Naive thymus-derived CD4-positive, alpha-beta T cell (primary cell): ENCODE measurements at regions of chrX and their contacts with region 1.

Region 1: DNA sequence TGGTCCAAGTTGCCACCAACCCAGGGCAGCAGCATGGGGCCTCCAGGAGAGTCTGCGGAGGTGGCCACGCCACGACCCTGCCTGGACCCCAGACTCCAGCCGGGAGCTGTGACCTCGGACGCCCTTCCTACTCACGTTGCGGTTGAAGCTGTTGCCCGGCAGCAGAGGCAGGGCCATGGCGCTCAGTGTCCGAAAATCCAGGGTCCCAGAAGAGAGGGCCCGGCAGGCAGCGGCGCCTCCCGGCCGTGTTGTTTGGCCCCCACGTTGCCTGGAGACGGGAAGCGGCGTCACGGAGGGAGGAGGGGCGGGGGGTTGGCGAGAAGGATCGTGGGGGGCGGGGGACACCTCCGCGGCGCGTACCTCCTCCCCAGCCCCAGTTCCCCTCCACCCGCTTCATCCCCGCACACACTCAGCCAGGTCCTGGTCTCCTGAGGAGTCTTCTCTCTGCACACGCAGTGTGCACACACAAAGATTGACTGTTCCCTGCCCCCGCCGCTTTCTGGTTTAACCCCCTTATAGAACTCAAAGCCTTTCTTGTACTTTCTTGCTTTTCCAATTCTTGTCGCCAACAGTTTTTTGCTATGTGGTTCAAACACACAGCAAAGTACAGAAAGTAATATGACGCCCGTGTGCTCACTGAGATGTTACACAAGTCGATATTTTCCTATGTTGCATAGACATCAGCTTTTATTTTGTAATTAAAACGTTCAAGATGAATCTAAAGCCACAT is at the start of gene EFHC2:
- DNase-seq: peak; percentile 24 to 65 (median 51)
- ATAC-seq: peak; percentile 75
- H3K4me3 ChIP-seq: peak within 1 kb of the TSS; percentile 73
- H3K4me3 Mint-ChIP-seq: peak within 1 kb of the TSS; percentile 85 to 96 (median 92)
- H3K27ac ChIP-seq: peak within 1 kb of the TSS; percentile 84
- H3K27ac Mint-ChIP-seq: peak within 1 kb of the TSS; percentile 92 to 99 (median 96)
- H3K4me1 ChIP-seq: peaks cover 0 to 3% of the 10 kb centered on the region in 2 donors
- H3K4me1 Mint-ChIP-seq: peaks cover 11 to 58% (median 21%) of the 10 kb centered on the region in 7 donors
- H3K27me3 ChIP-seq: no peaks in the 10 kb centered on the region
- H3K27me3 Mint-ChIP-seq: no peaks in the 10 kb centered on the region
- total RNA-seq, gene EFHC2: 0.31 to 2.8 (median 1.7) TPM

Region 2: DNA sequence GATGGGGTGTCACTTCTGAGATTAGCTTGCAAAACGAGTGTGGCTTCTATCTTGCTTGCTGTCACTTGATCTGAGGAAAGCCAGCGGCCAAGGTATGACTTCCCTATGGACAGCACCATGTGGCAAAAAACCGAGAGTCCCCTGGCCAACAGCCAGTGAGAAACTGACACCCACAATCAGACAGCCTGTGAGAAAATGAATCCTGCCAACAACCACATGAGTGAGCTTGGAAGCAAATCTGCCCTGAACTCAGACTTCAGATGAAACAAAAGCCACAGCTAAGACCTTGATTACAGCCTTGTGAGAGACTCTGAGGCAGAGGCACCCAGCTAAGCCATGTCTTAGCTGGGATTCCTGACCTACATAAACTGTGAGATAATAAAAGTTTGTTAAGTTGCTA is 1611.1 kb before region 1 on chrX:
- CTCF ChIA-PET with region 1: no interaction called
- POLR2A ChIA-PET with region 1: no interaction called
- intact Hi-C with region 1: no loop called
- DNase-seq: no peak
- ATAC-seq: no peak
- H3K4me3 ChIP-seq: no peak overlapping the region
- H3K4me3 Mint-ChIP-seq: no peak overlapping the region
- H3K27ac ChIP-seq: no peak overlapping the region
- H3K27ac Mint-ChIP-seq: peak overlapping the region in 1 of 9 donors; percentile 39
- H3K4me1 ChIP-seq: no peaks in the 10 kb centered on the region
- H3K4me1 Mint-ChIP-seq: peaks cover 0 to 8% (median 0%) of the 10 kb centered on the region in 7 donors
- H3K27me3 ChIP-seq: no peaks in the 10 kb centered on the region
- H3K27me3 Mint-ChIP-seq: no peaks in the 10 kb centered on the region

Region 3: GRCh38 chrX:44244008-44244407 is 99.6 kb before region 1 on chrX:
- CTCF ChIA-PET with region 1: interaction called, 3 read pairs
- POLR2A ChIA-PET with region 1: no interaction called
- intact Hi-C with region 1: loop called in 1 of 2 experiments (anchors 2 kb)
- DNase-seq: peak in 6 of 9 donors; percentile 8 to 51 (median 40)
- ATAC-seq: peak; percentile 46
- H3K4me3 ChIP-seq: no peak overlapping the region
- H3K4me3 Mint-ChIP-seq: peak overlapping the region in 2 of 10 donors; percentile 0 to 6
- H3K27ac ChIP-seq: no peak overlapping the region
- H3K27ac Mint-ChIP-seq: peak overlapping the region in 8 of 9 donors; percentile 5 to 79 (median 52)
- H3K4me1 ChIP-seq: peaks cover 5 to 22% of the 10 kb centered on the region in 2 donors
- H3K4me1 Mint-ChIP-seq: peaks cover 10 to 46% (median 30%) of the 10 kb centered on the region in 7 donors
- H3K27me3 ChIP-seq: no peaks in the 10 kb centered on the region
- H3K27me3 Mint-ChIP-seq: no peaks in the 10 kb centered on the region

Region 4: DNA sequence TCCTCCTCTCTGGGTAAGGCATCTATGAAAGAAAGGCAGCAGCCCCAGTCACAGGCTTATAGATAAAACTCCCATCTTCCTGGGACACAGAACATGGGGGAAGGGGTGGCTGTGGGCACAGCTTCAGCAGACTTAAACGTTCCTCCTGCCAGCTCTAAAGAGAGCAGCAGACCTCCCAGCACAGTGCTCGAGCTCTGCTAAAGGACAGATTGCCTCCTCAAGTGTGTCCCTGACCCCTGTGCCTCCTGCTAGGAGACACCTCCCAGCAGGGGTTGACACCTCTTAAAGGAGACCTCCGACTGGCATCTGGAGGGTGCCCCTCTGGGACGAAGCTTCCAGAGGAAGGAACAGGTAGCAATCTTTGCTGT is 90.0 kb before region 1 on chrX:
- CTCF ChIA-PET with region 1: no interaction called
- POLR2A ChIA-PET with region 1: interaction called, 4 read pairs
- intact Hi-C with region 1: loop called (anchors 1 to 2 kb)
- DNase-seq: no peak
- ATAC-seq: no peak
- H3K4me3 ChIP-seq: peak overlapping the region; percentile 14
- H3K4me3 Mint-ChIP-seq: peak overlapping the region; percentile 59 to 84 (median 72)
- H3K27ac ChIP-seq: peak overlapping the region; percentile 56
- H3K27ac Mint-ChIP-seq: peak overlapping the region; percentile 80 to 97 (median 91)
- H3K4me1 ChIP-seq: peaks cover 7 to 12% of the 10 kb centered on the region in 2 donors
- H3K4me1 Mint-ChIP-seq: peaks cover 15 to 64% (median 33%) of the 10 kb centered on the region in 7 donors
- H3K27me3 ChIP-seq: no peaks in the 10 kb centered on the region
- H3K27me3 Mint-ChIP-seq: no peaks in the 10 kb centered on the region

Region 5: DNA sequence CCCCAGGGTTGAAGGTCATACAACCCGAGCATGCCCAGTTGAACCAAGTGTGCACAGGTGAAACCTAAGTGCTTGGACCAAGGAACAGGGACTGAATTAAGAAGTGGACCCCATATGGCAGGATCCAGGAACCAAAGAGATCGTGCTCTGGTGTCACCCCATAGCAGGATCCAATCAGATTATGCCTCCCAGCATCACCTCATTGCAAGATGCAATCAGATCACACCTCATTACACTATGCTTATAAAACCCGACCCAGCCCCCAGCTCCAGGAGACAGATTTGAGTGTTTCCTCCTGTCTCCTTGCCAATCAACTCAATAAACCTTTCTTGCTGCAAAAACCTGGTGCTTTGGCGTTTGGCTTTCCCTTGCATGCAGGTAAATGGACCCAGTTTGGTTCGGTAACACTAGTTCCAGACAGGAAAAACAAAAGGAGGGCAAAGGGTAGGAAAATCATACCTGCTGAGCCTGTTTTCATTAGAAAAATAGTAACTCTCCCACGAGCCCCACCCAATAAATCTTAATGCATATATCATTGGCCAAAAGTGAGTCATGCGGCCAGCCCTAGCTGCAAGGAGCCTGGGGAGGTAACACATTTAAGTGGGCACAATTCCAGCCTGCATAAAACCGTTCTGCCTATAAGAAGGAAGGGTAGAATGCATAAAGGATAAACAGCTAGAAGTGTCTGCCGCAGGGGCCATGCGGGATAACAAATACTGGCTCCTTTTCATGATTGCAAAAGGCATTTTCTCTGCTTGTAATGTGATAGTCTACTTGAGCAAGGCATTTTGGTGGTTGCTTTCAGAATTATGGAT is 37.4 kb before region 1 on chrX:
- CTCF ChIA-PET with region 1: no interaction called
- POLR2A ChIA-PET with region 1: no interaction called
- intact Hi-C with region 1: loop called in 1 of 2 experiments (anchors 5 kb)
- DNase-seq: no peak
- ATAC-seq: no peak
- H3K4me3 ChIP-seq: no peak overlapping the region
- H3K4me3 Mint-ChIP-seq: no peak overlapping the region
- H3K27ac ChIP-seq: no peak overlapping the region
- H3K27ac Mint-ChIP-seq: peak overlapping the region in 1 of 9 donors; percentile 62
- H3K4me1 ChIP-seq: no peaks in the 10 kb centered on the region
- H3K4me1 Mint-ChIP-seq: peaks cover 0 to 5% (median 0%) of the 10 kb centered on the region in 7 donors
- H3K27me3 ChIP-seq: no peaks in the 10 kb centered on the region
- H3K27me3 Mint-ChIP-seq: no peaks in the 10 kb centered on the region

Region 6: GRCh38 chrX:44330227-44330626 is 13.3 kb before region 1 on chrX:
- CTCF ChIA-PET with region 1: no interaction called
- POLR2A ChIA-PET with region 1: interaction called, 5 read pairs
- intact Hi-C with region 1: loop called in 1 of 2 experiments (anchors 1 kb)
- DNase-seq: peak in 6 of 9 donors; percentile 11 to 44 (median 32)
- ATAC-seq: peak; percentile 68
- H3K4me3 ChIP-seq: no peak overlapping the region
- H3K4me3 Mint-ChIP-seq: peak overlapping the region; percentile 21 to 73 (median 64)
- H3K27ac ChIP-seq: no peak overlapping the region
- H3K27ac Mint-ChIP-seq: peak overlapping the region in 8 of 9 donors; percentile 42 to 82 (median 71)
- H3K4me1 ChIP-seq: peaks cover 8 to 11% of the 10 kb centered on the region in 2 donors
- H3K4me1 Mint-ChIP-seq: peaks cover 3 to 57% (median 42%) of the 10 kb centered on the region in 7 donors
- H3K27me3 ChIP-seq: no peaks in the 10 kb centered on the region
- H3K27me3 Mint-ChIP-seq: no peaks in the 10 kb centered on the region

Region 7: DNA sequence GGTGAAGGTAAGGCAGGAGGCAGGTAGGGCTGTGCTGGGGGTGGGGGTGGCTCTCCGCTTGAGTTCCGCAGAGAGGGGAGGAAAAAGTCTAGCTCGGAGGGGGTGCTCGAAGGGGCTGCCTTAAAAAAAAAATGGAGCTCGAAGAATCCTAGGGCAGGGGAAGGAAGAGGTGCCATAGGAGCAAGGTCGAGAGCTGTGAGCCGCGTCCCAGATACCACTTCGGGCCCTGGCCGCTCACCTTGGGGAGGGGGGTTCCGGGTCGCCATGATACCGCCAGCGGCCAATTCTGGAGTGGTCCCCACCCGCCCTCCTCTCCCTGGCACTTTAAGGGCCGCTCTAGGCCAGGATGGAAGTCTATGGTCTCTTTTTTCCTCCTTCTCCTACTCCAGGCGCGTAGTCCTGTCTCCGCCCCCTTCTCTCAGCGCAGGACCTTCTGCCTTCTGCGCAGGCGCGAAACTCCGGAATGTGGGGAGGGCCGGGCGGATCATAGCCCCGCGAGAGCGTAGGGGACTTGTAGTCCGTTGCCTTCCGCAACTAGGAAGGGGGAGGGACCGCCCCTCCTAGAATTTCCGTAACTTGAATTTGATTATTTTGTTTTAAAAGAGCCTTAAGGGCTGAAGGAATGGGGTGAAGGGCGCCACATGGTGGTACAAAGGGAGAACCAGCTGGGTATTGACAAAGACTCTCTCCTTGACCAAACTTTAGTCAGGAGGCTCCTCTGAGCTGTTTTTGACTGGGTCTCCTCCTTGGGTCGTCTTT is 199.2 kb after region 1 on chrX and contains the start of gene FUNDC1:
- CTCF ChIA-PET with region 1: no interaction called
- POLR2A ChIA-PET with region 1: no interaction called
- intact Hi-C with region 1: loop called (anchors 2 to 10 kb)
- DNase-seq: peak; percentile 75 to 93 (median 89)
- ATAC-seq: peak; percentile 98
- H3K4me3 ChIP-seq: peak within 1 kb of the TSS; percentile 79
- H3K4me3 Mint-ChIP-seq: peak within 1 kb of the TSS; percentile 89 to 97 (median 93)
- H3K27ac ChIP-seq: peak within 1 kb of the TSS; percentile 92
- H3K27ac Mint-ChIP-seq: peak within 1 kb of the TSS; percentile 86 to 97 (median 93)
- H3K4me1 ChIP-seq: peaks cover 5 to 12% of the 10 kb centered on the region in 2 donors
- H3K4me1 Mint-ChIP-seq: peaks cover 12 to 54% (median 37%) of the 10 kb centered on the region in 7 donors
- H3K27me3 ChIP-seq: no peaks in the 10 kb centered on the region
- H3K27me3 Mint-ChIP-seq: no peaks in the 10 kb centered on the region
- total RNA-seq, gene FUNDC1: 5.2 to 10.1 (median 9.8) TPM

Region 8: DNA sequence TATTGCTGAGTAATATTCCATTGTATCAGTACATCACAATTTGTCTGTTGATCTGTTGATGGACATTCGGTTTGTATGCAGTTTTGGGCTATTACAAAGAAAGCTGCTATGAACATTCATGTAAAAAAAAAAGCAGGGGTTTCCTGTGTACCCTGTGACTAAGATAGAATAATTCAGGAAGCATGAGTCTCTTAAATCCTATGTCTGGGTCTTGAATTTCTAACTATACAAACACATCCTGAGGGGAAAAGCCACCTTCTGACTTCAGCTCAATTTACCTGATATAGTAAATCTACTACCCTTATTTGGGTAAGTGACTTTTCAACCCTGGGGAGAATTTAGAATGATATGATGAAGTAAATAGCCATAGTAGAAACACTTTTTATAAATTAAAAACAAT is 293.7 kb after region 1 on chrX:
- CTCF ChIA-PET with region 1: no interaction called
- POLR2A ChIA-PET with region 1: no interaction called
- intact Hi-C with region 1: no loop called
- DNase-seq: no peak
- ATAC-seq: no peak
- H3K4me3 ChIP-seq: no peak overlapping the region
- H3K4me3 Mint-ChIP-seq: no peak overlapping the region
- H3K27ac ChIP-seq: no peak overlapping the region
- H3K27ac Mint-ChIP-seq: no peak overlapping the region
- H3K4me1 ChIP-seq: no peaks in the 10 kb centered on the region
- H3K4me1 Mint-ChIP-seq: no peaks in the 10 kb centered on the region
- H3K27me3 ChIP-seq: no peaks in the 10 kb centered on the region
- H3K27me3 Mint-ChIP-seq: no peaks in the 10 kb centered on the region

Region 9: DNA sequence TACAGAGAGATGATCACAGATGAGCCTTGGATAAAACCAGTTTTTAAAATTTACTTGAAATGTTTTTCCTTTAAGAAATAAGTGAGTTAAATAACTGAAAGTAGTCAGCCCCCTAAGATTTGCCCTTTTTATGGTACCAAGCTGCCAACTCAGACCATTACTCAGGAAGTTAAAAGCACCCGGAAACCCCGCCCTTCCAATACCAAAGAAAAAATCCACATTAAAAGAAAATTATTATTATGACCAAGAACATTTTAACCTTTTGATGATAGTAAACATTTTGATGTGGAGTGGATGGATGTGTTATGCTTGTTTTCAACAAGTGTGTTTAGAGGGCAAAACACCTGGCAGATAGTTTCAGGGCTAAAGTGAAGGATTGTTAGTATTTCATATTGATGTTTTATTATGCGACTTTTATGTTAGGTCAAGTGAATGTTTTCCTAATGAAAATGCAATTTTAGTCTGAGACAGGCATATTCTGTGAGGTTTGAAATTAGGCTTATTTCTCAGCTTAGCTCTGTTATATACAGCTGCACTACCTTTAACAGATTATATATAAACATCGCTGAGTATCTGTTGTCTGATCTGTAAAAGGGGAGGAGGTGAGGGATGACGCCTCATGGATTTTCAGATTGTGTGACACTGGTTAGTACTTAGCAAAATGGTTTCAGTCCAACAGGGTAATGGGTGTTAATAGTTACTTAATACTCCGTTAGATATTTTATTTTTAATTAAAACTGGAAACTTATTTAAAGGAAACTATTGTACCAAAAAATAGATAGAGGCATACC is 618.4 kb after region 1 on chrX:
- CTCF ChIA-PET with region 1: no interaction called
- POLR2A ChIA-PET with region 1: no interaction called
- intact Hi-C with region 1: no loop called
- DNase-seq: no peak
- ATAC-seq: no peak
- H3K4me3 ChIP-seq: no peak overlapping the region
- H3K4me3 Mint-ChIP-seq: peak overlapping the region in 4 of 10 donors; percentile 6 to 53 (median 20)
- H3K27ac ChIP-seq: no peak overlapping the region
- H3K27ac Mint-ChIP-seq: peak overlapping the region in 4 of 9 donors; percentile 30 to 71 (median 55)
- H3K4me1 ChIP-seq: peaks cover 0 to 6% of the 10 kb centered on the region in 2 donors
- H3K4me1 Mint-ChIP-seq: peaks cover 22 to 91% (median 63%) of the 10 kb centered on the region in 7 donors
- H3K27me3 ChIP-seq: no peaks in the 10 kb centered on the region
- H3K27me3 Mint-ChIP-seq: no peaks in the 10 kb centered on the region

Region 10: DNA sequence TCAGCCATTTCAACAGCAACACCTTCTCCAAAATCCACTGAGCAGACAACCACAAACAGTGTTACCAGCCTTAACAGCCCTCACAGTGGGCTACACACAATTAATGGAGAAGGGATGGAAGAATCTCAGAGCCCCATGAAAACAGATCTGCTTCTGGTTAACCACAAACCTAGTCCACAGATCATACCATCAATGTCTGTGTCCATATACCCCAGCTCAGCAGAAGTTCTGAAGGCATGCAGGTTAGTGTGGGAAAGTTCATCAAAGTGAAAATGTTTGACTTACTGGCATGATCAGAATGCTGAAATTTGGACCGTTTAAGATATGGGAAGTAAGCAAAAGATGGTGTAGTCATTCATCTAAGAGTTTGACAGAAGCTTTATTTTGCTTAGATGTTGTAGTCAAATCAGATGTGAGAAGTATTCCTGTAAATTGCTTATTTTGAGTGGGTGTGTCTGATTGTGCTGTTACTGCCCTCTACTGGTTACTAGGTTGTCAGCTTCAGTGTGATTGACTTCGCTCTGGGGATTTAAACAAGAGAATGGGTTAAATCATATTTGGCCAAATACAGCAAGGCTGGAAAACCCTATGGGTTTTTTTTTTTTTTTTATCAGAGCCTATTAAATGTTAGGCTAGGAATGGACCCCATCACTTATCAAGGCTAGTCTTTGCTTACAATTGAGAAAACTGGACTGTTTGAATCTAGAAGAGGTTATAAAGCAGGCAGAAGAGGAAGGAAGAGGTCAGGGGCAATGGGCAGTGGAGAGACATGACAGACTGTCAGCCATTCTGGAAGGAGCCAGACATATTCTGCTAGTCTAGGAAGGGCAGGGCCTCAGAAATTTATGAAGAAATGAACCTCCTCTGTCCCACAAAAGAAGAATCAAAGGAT is 726.8 kb after region 1 on chrX:
- CTCF ChIA-PET with region 1: no interaction called
- POLR2A ChIA-PET with region 1: no interaction called
- intact Hi-C with region 1: loop called (anchors 10 kb)
- DNase-seq: peak in 7 of 9 donors; percentile 9 to 59 (median 47)
- ATAC-seq: peak; percentile 74
- H3K4me3 ChIP-seq: no peak overlapping the region
- H3K4me3 Mint-ChIP-seq: peak overlapping the region in 7 of 10 donors; percentile 7 to 50 (median 17)
- H3K27ac ChIP-seq: peak overlapping the region; percentile 36
- H3K27ac Mint-ChIP-seq: peak overlapping the region; percentile 61 to 88 (median 74)
- H3K4me1 ChIP-seq: peaks cover 0 to 4% of the 10 kb centered on the region in 2 donors
- H3K4me1 Mint-ChIP-seq: peaks cover 30 to 87% (median 67%) of the 10 kb centered on the region in 7 donors
- H3K27me3 ChIP-seq: no peaks in the 10 kb centered on the region
- H3K27me3 Mint-ChIP-seq: no peaks in the 10 kb centered on the region